HEK293T (cell line): ENCODE measurements at regions of chr12 and their contacts with region 1.

Region 1: DNA sequence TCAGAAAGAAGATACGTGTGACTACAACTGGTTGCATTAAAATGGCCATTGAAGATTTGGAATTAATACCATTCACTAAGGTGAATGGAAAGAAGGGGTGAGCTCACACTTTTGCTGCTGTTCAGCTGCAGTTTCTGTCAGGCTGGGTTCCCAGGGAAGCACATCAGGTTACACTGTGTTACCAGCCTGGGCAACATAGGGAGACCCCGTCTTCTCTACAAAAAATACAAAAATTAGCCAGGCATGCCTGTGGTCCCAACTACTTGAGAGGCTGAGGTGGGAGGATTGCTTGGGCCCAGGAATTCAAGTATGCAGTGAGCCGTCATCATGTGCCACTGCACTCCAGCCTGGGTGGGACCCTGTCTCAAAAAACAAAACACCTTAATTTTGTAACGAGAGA is 12.9 kb upstream of the ZCCHC8 start:
- DNase-seq: no peak

Region 2: DNA sequence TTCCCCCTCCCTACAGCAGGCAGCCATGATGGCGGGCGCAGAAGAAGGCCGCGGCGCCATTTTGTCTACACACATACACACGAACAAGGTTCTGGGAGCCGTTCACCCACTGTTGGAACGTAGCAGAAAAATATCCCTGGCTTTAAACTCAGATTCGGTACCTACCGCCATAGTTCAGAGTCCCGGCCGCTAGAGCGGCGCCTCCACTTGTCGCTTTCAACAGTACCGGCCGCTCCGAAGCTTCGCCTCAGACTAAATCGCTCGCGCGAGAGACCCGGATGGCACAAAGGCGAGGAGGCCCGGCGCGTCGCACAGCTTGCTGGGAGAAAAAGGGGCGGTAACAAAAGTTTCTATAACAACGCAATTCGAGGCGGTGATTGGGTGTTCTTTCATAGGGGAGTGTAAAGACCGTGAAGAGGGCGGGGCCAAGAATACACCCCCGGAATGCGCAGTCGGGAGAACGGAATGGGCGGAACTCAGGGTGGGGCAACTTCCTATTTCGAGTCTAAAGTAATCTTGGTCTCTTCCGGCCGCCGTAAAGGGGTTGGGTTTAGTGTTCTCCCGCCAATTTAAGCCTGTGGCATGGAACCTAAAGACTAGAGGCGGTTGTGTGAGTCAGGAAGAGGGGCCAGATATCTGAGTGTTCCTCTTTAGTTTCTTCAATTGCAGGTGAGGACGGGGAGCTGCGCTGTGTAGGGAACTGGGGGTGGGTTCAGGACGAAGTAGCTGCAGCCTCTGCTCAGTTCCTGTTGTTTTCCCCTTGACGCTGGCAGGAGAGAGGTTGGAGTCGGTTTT is 13.2 kb after region 1 on chr12 and contains the starts of genes KNTC1 and RSRC2:
- CTCF ChIA-PET with region 1: no interaction called
- POLR2A ChIA-PET with region 1: interaction called, 17 read pairs
- DNase-seq: peak; percentile 97